ENCODE measurements at regions of chr17 and their contacts with region 1.

Region 1: DNA sequence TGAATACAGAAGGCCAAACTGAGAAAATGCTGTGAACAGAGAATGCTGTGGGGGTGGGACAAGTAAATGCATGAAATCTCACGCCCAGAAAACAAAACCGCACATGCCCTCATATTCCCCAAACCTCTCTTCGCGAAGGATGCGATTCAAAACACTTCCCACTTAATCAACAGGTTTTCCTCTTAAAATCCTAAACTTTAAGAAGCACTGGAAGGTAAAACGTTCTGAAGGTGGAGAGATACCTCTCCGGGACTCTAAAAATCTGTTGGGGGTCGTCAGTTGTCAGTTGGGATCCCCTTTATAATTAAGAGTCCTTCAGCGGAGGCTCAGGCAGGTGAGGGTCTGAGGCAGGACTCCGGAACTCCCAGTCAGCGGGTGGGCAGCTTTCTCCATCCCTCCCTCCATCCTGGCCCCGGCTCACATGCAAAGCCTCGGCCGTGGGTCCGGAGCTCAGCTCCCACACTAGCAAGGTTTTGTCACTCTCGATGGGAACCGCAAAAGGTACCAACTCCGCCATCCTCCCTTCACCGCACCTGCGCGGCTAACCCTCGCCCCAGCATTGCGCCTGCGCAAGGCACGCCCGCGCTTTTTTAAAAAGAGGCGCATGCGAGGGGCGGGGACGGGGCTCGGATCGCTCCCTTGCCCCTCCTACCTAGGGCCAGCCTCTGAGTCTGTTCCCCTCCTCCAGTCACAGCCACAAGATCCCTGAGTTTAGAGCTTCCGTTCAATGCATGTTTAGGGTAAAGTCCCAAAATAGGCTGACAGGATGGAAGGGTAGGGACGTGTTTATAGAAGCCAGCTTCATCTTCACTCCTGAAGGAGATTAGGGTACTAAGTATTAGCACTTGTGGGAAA is at the start of gene RDM1:
- DNase-seq: peak; percentile 96
- H3K4me3 Mint-ChIP-seq: peak within 1 kb of the TSS; percentile 82
- H3K27ac Mint-ChIP-seq: peak within 1 kb of the TSS; percentile 43
- H3K4me1 Mint-ChIP-seq: peaks cover 15% of the 10 kb centered on the region
- H3K27me3 Mint-ChIP-seq: peaks cover 5% of the 10 kb centered on the region
- total RNA-seq, gene RDM1: 18.6 to 21.6 TPM

Region 2: DNA sequence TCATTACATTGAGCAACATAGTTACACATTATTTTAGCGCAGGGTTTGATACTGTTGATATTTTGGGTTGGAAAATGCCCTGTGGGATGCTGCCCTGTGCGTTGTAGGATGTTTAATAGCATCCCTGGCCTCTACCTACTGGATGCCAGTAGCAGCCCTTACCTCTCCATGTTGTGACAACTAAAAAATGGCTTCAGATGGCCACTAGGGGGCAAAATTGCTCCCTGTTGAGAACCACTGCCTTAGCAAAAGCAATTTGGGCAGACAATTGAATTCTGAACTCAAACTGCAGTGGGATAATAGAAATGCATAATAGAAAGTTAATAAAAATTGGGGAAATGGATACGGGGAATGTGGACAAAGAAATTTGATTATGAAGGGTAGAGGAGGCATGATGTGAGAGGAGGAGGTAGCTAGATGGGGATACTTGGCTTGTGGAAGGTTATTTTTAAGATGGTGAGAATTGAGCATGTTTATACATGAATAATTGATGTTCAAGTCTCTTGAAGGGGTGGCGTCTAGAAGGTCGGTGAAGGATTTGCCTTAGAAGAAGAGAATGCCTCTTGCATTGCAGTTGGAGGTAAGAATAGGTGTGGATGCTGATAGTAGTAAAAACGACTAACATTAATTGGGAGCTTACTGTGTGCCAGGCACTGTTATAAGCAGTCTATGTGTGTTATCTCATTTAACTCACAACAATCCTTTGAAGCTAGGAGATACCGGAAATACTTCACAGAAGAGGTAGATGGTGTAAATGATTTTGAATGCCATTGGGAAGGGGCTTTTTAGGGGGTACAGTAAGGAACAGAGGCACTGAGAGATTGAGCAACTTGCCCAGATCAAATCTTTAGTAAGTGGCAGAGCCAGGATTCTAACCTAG is 80.7 kb before region 1 on chr17:
- CTCF ChIA-PET with region 1: interaction called, 4 read pairs
- intact Hi-C with region 1: loop called (anchors 5 kb)
- DNase-seq: peak; percentile 72
- H3K4me3 Mint-ChIP-seq: no peak overlapping the region
- H3K27ac Mint-ChIP-seq: no peak overlapping the region
- H3K4me1 Mint-ChIP-seq: no peaks in the 10 kb centered on the region
- H3K27me3 Mint-ChIP-seq: no peaks in the 10 kb centered on the region

Region 3: DNA sequence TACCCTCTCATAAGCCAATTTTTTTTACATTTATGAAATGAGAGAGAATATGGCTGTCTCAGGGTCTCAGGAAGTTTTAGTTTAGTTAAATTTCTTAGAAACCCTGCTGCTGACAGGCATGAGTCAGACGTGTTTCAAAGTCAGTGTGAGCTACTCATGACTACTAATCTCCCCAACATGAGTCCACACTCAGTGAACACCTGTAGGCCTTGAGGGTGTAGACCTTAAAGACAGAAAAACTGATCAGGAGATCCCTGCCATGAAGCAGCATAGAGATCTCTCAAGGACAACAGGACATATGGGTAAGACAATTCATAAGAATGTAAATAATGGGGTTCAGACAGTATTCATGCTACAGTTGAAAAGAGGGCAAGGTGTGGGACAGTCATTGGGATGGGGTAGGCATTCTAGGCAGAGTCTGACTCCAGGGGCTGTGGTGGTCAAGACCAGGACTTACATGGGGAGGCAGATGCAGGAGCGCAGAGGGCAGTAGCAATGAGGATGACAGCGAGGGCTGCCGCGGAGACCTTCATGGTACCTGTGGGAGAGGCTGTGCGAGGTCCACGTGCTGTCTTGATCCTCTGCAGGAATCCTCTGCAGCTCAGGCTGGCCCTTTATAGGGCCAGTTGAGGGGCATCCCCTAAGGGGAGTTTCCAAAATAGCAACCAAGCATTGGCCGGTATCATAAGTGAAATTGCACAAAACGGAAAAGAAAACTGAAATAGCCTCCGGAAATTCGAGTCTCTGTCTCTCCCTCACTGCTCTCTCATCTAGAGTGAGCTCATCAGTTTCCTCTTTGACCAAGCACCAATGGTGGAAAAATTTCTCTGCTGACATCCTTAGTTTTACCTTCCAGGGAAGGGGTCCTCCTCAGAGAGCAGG is 50.4 kb before region 1 on chr17 and contains the start of gene CCL5:
- CTCF ChIA-PET with region 1: interaction called, 3 read pairs
- intact Hi-C with region 1: loop called (anchors 10 kb)
- DNase-seq: peak; percentile 37
- H3K4me3 Mint-ChIP-seq: no peak within 1 kb of the TSS
- H3K27ac Mint-ChIP-seq: peak within 1 kb of the TSS; percentile 46
- H3K4me1 Mint-ChIP-seq: peaks cover 17% of the 10 kb centered on the region
- H3K27me3 Mint-ChIP-seq: no peaks in the 10 kb centered on the region
- total RNA-seq, gene CCL5: 1.9 to 2.5 TPM